ENCODE measurements at regions of chr3 and their contacts with region 1.

Region 1: DNA sequence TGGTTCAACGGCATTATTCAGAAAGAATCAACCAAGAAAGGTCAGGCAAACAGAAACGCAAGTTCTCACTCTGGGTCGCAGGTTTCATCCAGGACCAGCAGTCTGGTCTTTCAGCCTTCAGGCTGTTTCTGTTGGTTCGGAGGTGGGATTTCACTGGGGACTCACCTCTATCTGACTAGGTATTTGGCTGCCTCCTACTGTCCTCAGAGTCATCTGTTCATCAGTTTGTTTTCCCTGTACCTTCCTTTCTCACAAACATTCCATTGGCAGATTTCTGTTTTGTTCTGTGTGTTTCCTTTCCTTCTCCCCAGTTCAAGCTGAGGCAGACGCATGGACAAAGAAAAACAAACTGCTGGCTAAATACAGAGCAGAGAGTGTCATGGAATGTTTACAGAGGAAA is 1046.6 kb upstream of the CFAP20DC start:
- DNase-seq: no peak
- ATAC-seq: no peak
- H3K4me3 ChIP-seq: no peak overlapping the region
- H3K27ac ChIP-seq: no peak overlapping the region
- H3K4me1 ChIP-seq: no peaks in the 10 kb centered on the region
- H3K27me3 ChIP-seq: no peaks in the 10 kb centered on the region
- CTCF ChIP-seq: no peak
- POLR2A ChIP-seq: no peak

Region 2: GRCh38 chr3:60147249-60147950 is 51.0 kb after region 1 on chr3:
- intact Hi-C with region 1: loop called in 1 of 10 experiments (anchors 2 kb)
- DNase-seq: no peak
- ATAC-seq: no peak
- H3K4me3 ChIP-seq: no peak overlapping the region
- H3K27ac ChIP-seq: no peak overlapping the region
- H3K4me1 ChIP-seq: peaks cover 0 to 2% (median 0%) of the 10 kb centered on the region in 12 donors
- H3K27me3 ChIP-seq: no peaks in the 10 kb centered on the region
- CTCF ChIP-seq: no peak
- POLR2A ChIP-seq: no peak

Region 3: GRCh38 chr3:60365360-60365759 is 269.0 kb after region 1 on chr3:
- intact Hi-C with region 1: no loop called
- DNase-seq: no peak
- ATAC-seq: no peak
- H3K4me3 ChIP-seq: no peak overlapping the region
- H3K27ac ChIP-seq: no peak overlapping the region
- H3K4me1 ChIP-seq: no peaks in the 10 kb centered on the region
- H3K27me3 ChIP-seq: no peaks in the 10 kb centered on the region
- CTCF ChIP-seq: no peak
- POLR2A ChIP-seq: no peak